PC-3 (cell line): ENCODE measurements at regions of chr11 and their contacts with region 1.

Region 1: GRCh38 chr11:77446911-77447629 is 26.8 kb downstream of the PAK1 start:
- DNase-seq: peak; percentile 12
- ATAC-seq: no peak
- H3K4me3 ChIP-seq: no peak overlapping the region
- H3K27ac ChIP-seq: no peak overlapping the region
- H3K4me1 ChIP-seq: no peaks in the 10 kb centered on the region
- H3K27me3 ChIP-seq: no peaks in the 10 kb centered on the region
- CTCF ChIP-seq: no peak

Region 2: GRCh38 chr11:77276271-77276670 is 170.8 kb before region 1 on chr11:
- CTCF ChIA-PET with region 1: no interaction called
- POLR2A ChIA-PET with region 1: interaction called, 13 read pairs
- intact Hi-C with region 1: no loop called
- DNase-seq: no peak
- ATAC-seq: no peak
- H3K4me3 ChIP-seq: no peak overlapping the region
- H3K27ac ChIP-seq: no peak overlapping the region
- H3K4me1 ChIP-seq: peaks cover 12% of the 10 kb centered on the region
- H3K27me3 ChIP-seq: no peaks in the 10 kb centered on the region
- CTCF ChIP-seq: no peak

Region 3: GRCh38 chr11:77418155-77418970 is 28.7 kb before region 1 on chr11:
- CTCF ChIA-PET with region 1: no interaction called
- POLR2A ChIA-PET with region 1: no interaction called
- intact Hi-C with region 1: no loop called
- DNase-seq: no peak
- ATAC-seq: no peak
- H3K4me3 ChIP-seq: no peak overlapping the region
- H3K27ac ChIP-seq: no peak overlapping the region
- H3K4me1 ChIP-seq: peaks cover 5% of the 10 kb centered on the region
- H3K27me3 ChIP-seq: no peaks in the 10 kb centered on the region
- CTCF ChIP-seq: no peak

Region 4: GRCh38 chr11:77506857-77507256 is 59.8 kb after region 1 on chr11:
- CTCF ChIA-PET with region 1: no interaction called
- POLR2A ChIA-PET with region 1: no interaction called
- intact Hi-C with region 1: no loop called
- DNase-seq: peak; percentile 96
- ATAC-seq: peak; percentile 48
- H3K4me3 ChIP-seq: no peak overlapping the region
- H3K27ac ChIP-seq: no peak overlapping the region
- H3K4me1 ChIP-seq: peaks cover 33% of the 10 kb centered on the region
- H3K27me3 ChIP-seq: peaks cover 38% of the 10 kb centered on the region
- CTCF ChIP-seq: no peak